ENCODE measurements at regions of chr3 and their contacts with region 1.

Region 1: DNA sequence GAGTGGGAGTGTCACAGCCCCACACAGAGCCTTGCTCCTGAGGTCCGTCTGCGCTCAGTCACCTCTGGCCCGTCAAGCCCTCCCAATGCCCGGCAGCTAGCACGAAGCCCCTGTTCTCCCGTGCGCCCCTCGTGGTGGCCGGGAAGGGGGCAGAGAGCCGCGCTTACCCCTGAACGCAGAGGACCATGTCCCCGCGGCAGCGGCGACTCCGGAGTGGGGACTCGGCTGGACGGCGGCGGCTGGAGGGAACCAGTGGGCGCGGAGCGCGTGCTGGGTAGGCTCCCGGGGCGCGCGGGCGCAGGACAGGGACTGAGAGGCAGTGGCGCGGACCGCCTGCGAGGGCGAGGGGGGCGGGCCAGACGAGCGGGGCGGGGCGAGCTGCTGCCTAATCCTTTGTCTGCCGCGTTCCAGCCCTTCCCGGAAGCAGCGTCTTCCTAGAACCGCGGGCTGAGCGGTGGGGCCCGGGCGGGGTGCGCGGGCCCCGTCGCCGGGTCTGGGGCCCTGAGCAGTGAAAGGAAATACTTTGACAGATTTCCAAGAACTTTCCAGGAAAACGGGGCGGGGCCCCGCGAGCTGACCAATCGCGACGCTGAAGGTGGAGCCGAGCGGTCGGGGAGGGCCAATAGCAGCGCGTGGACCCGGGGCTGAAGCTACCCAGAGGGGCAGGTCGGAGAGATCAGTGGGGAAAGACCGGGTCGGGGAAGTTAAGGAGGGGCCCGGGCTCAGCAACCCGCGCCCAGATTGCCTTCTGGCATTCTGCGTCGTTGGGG is at the start of gene CISH:
- DNase-seq: peak; percentile 96 to 98 (median 97)
- ATAC-seq: peak; percentile 80 to 86 (median 82)
- H3K4me3 ChIP-seq: peak within 1 kb of the TSS; percentile 56 to 95 (median 80)
- H3K27ac ChIP-seq: peak within 1 kb of the TSS; percentile 77 to 100 (median 92)
- H3K4me1 ChIP-seq: peaks cover 5 to 81% (median 63%) of the 10 kb centered on the region in 12 donors
- H3K27me3 ChIP-seq: no peaks in the 10 kb centered on the region
- CTCF ChIP-seq: peak; percentile 7 to 59 (median 34)
- POLR2A ChIP-seq: peak; percentile 21 to 56
- total RNA-seq, gene CISH: 10.1 to 57.0 (median 20.3) TPM

Region 2: DNA sequence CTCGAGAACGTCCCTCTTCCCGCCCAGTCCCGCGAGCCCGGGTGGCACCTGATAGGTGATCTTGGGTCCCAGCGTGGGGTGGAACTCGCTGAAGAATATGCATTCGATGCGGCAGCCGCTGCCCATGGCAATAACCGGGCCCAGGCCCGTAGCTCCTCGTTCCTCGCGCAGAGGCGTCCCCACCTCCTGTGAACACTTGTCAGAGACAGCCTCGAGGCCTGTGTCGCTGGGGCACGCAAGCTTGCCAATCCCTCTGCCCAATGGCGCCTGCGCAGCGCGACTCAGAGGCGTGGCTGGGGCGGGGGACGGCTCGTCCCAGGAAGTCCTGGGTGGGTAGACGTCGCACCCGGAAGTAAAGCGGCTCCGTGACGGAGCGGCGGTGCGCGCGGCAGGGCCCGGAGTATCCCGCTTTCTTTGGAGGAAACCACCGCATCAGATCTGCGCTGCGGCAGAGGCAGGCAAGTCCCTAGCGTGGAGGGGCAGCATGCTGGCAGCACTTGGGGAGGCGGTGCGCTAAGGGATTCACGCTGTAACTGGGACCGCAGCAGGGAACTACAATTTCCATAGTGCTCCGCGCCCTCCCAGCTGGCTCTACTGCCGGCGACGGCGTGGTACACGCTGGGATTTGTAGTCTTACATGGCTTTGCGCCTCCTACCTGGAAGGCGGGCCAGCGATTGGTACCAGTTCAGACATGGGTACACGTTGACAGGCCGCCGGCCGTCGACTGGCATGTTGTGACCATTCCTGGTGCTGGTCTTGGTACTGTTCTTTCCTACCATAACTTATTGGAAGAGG is 260.9 kb before region 1 on chr3 and contains the starts of genes CYB561D2 and NPRL2:
- intact Hi-C with region 1: loop called in 4 of 10 experiments (anchors 5 kb)
- DNase-seq: peak; percentile 96 to 99 (median 98)
- ATAC-seq: peak; percentile 88 to 97 (median 96)
- H3K4me3 ChIP-seq: peak within 1 kb of the TSS; percentile 24 to 95 (median 84)
- H3K27ac ChIP-seq: peak within 1 kb of the TSS; percentile 91 to 98 (median 95)
- H3K4me1 ChIP-seq: peaks cover 7 to 63% (median 40%) of the 10 kb centered on the region in 12 donors
- H3K27me3 ChIP-seq: no peaks in the 10 kb centered on the region
- CTCF ChIP-seq: peak in 2 of 12 donors; percentile 5 to 8
- POLR2A ChIP-seq: peak; percentile 58 to 86
- total RNA-seq, gene CYB561D2: 4.9 to 16.5 (median 7.8) TPM
- total RNA-seq, gene NPRL2: 12.0 to 18.4 (median 15.3) TPM

Region 3: GRCh38 chr3:50519471-50520089 is 92.1 kb before region 1 on chr3:
- intact Hi-C with region 1: loop called in 4 of 10 experiments (anchors 1 to 5 kb)
- DNase-seq: peak; percentile 46 to 73 (median 52)
- ATAC-seq: peak in 1 of 4 donors; percentile 39
- H3K4me3 ChIP-seq: no peak overlapping the region
- H3K27ac ChIP-seq: no peak overlapping the region
- H3K4me1 ChIP-seq: peaks cover 0 to 27% (median 19%) of the 10 kb centered on the region in 12 donors
- H3K27me3 ChIP-seq: no peaks in the 10 kb centered on the region
- CTCF ChIP-seq: peak; percentile 71 to 90 (median 77)
- POLR2A ChIP-seq: no peak

Region 4: DNA sequence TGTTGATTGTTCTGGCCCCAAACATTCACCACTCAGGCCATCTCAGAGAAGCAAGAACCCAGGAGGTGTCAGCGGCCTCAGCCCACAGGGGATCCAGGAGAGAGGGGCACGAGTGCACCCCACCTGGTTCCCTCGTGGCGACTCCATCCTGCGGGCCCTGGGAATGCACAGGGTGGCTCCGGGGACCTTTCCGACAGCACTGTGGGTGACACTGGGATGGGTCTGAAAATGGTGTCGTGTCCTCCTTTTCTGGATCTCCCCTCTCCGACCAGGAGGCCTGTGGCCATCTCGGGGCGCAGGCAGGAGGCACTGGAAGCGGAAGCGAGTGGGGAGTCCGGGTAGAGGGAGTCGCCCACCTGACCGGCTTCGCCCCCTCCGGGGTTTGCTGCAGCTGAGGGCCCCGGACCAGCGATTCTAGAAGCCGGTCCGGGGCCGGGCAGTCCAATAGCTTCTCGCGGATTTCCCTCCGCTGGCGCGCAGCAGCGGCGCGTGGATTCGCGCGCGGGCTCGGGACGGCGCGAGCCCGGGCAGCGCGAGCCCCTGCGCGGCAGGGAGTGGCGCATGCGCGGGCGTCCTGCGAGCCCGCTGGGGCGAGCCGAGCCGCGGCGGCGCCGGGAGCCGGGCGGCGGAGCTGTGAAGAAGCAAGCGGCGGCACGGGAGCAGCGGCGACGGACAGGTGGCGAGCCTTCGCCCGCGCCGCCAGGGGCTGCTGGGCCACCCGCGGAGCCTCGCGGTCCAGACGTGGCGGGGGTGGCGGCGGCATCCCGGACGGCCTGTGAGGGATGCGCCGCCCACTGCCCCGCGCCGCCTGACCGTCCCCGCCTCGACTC is 62.9 kb after region 1 on chr3 and contains the start of gene DOCK3:
- intact Hi-C with region 1: no loop called
- DNase-seq: peak; percentile 41 to 81 (median 62)
- ATAC-seq: peak; percentile 66 to 94 (median 88)
- H3K4me3 ChIP-seq: peak within 1 kb of the TSS; percentile 14 to 82 (median 55)
- H3K27ac ChIP-seq: peak within 1 kb of the TSS in 2 of 12 donors; percentile 42 to 60
- H3K4me1 ChIP-seq: peaks cover 0 to 12% (median 1%) of the 10 kb centered on the region in 12 donors
- H3K27me3 ChIP-seq: peaks cover 2 to 61% (median 34%) of the 10 kb centered on the region in 9 donors
- CTCF ChIP-seq: no peak
- POLR2A ChIP-seq: no peak
- total RNA-seq, gene DOCK3: 2.9 to 6.7 (median 4.8) TPM

Region 5: DNA sequence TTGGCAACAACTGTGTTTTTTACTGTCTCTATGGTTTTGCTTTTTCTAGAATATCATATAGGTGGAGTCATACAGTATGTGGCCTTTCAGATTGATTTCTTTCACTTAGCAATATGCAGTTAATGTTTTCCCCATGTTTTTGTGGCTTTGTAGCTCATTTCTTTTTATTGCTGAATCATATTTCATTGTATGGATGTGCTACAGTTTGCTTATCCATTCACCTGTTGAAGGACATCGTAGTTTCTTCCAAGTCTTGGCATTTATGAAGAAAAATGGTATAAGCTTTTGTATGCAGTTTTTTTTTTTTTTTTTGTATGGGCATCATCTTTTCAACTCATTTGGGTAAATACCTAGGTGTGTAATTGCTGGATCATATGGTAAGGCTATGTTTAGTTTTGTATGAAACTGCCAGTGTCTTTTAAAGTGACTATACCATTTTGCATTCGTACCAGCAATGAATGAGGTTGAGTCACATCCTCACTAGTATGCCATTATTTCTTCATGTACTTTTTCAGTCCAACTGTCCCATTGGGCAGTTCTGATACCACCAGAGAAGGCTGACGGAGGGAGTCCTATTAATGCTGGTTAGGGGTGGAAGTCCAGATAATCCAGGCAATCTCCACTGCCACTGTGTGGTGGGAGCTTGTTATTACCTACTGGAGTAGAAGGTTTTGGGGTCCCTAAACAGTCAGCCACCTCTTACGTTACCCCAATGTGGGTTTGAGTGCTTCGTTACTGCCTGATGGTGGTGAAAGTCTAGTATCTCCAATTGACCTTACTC is 273.6 kb after region 1 on chr3:
- intact Hi-C with region 1: loop called in 2 of 10 experiments (anchors 10 kb)
- DNase-seq: no peak
- ATAC-seq: peak in 2 of 4 donors; percentile 34 to 61
- H3K4me3 ChIP-seq: no peak overlapping the region
- H3K27ac ChIP-seq: no peak overlapping the region
- H3K4me1 ChIP-seq: no peaks in the 10 kb centered on the region
- H3K27me3 ChIP-seq: no peaks in the 10 kb centered on the region
- CTCF ChIP-seq: peak in 8 of 12 donors; percentile 13 to 38 (median 26)
- POLR2A ChIP-seq: no peak

Region 6: DNA sequence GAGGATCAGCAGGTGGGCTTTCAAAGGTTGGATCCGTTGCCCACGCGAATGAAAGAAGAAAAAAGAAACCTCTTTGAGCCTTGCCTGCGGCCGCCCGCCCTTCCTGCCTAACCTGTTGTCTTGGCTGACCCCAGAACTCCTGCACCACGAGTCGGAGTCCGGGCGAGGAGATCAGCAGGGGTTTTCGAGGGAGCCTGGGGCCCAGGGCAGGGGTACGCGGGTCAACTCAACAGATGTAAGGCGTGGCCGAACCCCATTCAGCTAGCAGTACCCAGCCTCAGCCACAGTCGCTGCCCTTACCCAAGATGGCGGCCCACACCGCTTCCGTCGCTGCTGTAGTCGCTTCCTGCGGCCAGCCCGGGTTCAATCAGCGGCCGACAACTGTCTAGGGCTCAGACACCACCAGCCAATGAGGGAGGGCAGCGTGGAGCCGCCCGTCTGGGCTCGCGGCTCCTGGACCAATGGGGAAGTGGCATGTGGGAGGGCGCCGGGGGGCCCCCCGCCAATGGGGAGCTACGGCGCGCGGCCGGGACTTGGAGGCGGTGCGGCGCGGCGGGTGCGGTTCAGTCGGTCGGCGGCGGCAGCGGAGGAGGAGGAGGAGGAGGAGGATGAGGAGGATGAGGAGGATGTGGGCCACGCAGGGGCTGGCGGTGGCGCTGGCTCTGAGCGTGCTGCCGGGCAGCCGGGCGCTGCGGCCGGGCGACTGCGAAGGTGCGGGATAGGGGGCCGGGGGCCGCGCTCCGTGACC is 773.3 kb after region 1 on chr3 and contains the start of gene MANF:
- intact Hi-C with region 1: loop called in 7 of 10 experiments (anchors 2 to 5 kb)
- DNase-seq: peak; percentile 98 to 99 (median 99)
- ATAC-seq: peak; percentile 98 to 99 (median 98)
- H3K4me3 ChIP-seq: peak within 1 kb of the TSS; percentile 76 to 97 (median 82)
- H3K27ac ChIP-seq: peak within 1 kb of the TSS; percentile 84 to 97 (median 94)
- H3K4me1 ChIP-seq: peaks cover 12 to 51% (median 37%) of the 10 kb centered on the region in 12 donors
- H3K27me3 ChIP-seq: no peaks in the 10 kb centered on the region
- CTCF ChIP-seq: peak in 3 of 12 donors; percentile 7 to 13 (median 12)
- POLR2A ChIP-seq: peak; percentile 77 to 97
- total RNA-seq, gene MANF: 22.3 to 87.2 (median 47.5) TPM

Region 7: DNA sequence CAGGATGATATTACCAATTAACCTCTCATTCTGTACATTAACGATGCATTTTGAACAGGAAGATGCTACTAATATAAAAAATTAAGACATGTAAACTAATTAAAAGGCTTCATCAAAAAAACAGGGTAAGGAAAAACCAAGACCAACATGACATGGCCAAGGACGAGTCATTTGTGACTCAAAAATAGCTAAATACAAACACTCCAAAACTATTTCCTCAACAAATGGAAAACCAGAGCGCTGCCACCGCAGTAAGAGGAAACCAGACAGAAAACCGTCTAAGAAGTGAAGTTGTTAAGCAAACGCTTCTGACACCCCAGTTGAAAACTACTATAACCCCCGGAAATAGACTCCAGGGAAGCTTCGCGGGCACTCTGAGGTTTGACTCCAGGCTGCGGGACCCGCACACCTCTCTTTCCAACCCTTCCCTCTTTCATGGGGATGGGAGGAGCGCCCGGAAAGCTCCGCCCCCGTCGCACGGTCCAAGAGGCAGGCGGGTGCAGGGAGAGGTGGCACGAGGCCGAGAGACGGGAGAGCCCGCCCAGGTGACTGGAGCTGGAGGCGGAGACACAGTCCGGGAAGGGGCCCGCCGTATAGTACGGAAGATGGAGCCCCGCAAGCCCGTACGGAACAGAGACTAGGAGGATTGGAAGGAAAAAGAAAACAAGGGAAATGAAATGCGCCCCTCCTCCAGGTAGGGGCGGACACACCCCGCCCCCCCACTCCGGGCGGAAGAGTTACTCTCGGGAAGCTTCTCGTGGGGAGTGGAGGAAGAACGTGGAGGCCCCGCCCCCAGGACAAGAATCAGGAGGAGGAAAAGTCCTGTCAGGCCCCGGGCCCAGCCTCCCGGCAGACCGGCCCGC is 887.5 kb after region 1 on chr3:
- intact Hi-C with region 1: loop called in 1 of 10 experiments (anchors 5 kb)
- DNase-seq: peak; percentile 92 to 96 (median 95)
- ATAC-seq: peak; percentile 83 to 88 (median 85)
- H3K4me3 ChIP-seq: peak overlapping the region; percentile 63 to 97 (median 88)
- H3K27ac ChIP-seq: peak overlapping the region; percentile 62 to 99 (median 95)
- H3K4me1 ChIP-seq: peaks cover 0 to 21% (median 5%) of the 10 kb centered on the region in 12 donors
- H3K27me3 ChIP-seq: no peaks in the 10 kb centered on the region
- CTCF ChIP-seq: no peak
- POLR2A ChIP-seq: peak in 1 of 2 donors; percentile 20

Measured in heart left ventricle (tissue), 16 donors.